Head of caudate nucleus (tissue), 42 donors: ENCODE measurements at regions of chr5 and their contacts with region 1.

Region 1: DNA sequence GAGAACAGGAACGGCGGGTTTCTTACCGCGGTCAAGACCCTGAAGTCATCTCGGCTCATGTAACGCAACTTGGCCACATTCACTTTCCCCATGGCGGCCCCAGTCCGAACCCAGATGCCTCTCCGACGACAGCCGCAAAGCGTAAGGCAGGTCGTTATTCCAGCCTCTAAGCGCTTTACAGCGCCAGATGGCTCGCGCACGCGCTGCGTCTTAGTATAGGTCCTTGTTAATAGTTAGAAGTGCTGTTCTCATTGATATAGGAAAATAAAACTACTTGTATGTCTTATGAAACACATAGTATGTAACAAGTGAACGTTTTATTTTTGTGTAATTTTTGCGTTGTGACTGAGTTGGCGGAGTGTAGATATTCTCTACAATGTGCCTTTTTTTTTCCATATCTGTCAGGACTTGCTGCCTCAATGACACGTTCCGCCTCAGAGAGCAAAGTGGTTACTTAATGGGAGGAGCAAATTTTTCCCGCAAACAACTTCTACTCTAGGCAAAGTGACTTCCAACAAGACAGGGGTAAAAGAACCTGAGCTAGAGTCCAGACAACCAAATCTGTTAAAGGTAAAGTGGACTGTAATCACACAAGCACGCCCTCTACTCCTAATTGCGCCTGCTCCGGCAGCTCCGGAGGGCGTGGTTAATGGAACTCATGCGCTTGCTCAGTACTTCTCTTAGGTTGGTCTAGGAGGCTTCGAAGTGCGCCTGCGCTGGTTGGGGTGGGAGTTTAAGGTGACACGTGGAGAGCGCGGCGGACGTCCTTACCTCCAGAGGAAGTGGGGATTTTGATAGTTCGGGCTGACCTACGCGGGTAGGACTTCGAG is at the start of gene RIOK2:
- DNase-seq: peak; percentile 85 to 97 (median 93)

Region 2: DNA sequence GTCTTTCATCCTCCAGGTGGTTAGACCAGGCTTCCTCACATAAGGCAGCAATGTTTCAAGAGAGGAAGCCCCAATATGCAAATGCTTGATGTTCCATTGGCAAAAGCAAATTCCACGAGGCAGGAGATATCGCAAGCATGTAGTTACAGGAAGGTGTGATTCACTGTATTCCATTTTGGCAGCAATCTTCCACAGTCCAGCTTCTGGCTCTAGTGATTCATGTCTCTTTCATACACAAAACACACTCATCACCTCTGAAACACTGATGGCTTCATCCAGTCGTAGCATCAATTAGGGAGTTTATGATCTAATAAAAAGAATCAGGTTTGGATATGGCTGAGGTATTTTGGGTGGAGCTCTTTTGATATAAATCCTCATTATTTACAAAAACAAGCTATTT is 551.9 kb after region 1 on chr5:
- intact Hi-C with region 1: no loop called
- DNase-seq: no peak

Region 3: DNA sequence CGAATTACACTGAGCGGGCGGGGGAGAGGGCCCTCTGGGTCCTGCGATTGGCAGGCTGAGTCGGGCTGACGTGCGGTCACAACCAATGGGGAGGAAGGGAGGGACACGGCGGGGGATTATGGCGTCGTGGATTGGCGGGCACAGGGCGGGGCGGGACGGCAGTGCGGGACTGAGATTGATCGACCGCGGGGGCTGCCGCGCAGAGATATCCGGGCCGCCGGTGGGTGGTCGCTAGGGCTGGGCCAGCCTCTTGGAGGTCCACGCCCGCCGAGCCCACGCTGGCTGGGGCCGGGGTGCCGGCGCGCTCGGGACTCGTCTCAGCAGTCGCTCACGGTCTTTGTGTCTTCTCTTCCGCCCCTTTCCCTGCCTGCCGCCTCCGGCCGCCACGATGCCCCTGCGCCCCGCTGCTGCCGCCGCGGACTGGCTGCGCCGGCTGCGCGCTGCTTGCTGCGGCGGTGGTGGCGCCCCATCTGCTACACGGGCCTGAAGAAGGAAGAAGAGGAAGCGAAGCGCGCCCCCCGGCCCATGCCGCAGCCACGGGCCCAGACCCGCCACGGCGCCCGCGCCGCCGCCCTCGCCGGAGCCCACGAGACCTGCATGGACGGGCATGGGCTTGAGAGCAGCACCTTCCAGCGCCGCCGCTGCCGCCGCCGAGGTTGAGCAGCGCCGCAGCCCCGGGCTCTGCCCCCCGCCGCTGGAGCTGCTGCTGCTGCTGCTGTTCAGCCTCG is 1590.3 kb after region 1 on chr5 and contains the start of gene RGMB:
- intact Hi-C with region 1: loop called (anchors 10 kb)
- DNase-seq: peak; percentile 93 to 100 (median 99)